ENCODE measurements at regions of chr7 and their contacts with region 1.

Region 1: GRCh38 chr7:99143853-99144672 is at the start of gene SMURF1:
- DNase-seq: peak; percentile 87
- total RNA-seq, gene SMURF1: 13.2 TPM

Region 2: DNA sequence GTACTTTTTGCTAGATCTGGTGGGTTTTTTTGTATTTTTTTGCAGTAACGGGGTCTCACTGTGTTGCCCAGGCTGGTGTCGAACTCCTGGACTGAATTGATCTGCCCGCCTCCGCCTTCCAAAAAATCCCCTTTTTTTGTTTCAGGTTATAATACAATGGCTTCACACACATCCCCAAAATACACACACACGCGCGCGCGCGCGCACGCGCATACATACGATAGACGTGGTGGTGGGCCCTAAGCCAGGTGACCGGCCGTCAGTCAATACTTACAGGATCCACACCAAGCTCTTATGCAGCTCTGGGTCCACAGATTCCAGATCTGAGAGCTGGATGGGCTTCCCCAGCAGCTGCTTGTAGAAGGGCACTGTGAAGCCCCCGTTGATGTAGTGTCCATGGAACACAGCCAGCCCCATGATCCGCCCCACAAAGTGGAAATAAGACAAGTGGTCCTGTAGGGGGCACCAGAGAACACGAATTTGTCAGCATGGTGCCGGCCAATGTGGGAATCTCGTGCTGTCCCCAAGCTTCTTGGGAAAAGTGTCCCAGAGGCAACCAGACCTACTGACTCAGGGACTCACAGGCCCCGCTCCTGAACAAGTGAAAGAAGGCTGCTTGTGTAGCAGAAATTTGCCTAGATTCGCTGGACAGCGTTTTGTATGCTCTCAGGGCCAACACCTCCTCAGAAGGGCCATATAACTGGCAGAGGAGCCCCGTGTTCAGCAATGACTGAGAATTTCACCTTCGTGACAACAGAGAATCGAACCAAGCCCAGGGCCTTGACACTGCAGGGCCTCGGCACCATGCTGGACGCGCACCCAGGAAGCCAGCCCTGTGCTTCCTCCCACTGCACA is 103.7 kb before region 1 on chr7:
- intact Hi-C with region 1: loop called (anchors 5 kb)
- DNase-seq: peak; percentile 83

Region 3: DNA sequence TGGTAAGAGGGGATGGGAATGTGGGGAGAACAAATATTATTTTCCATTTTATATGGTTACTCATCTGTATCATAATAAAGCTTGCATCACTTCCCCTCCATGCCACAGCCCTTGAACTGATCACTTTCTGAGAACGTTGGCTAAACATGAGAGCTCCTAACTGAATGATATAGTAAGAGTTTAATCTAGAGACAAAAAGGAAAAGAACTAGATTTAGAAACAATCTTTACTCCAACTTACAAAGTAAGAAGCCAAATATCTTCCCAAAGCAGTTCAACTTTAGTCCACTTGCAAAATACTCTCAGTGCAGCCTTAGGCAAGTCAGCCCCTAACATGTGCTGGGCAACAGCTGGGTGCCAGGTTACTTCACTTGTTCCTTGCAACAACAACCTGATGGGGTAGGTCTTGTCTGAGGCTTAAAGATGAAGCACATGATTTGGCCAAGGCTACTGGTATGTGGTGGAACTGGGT is 20.5 kb before region 1 on chr7:
- intact Hi-C with region 1: loop called (anchors 2 kb)
- DNase-seq: no peak

Region 4: DNA sequence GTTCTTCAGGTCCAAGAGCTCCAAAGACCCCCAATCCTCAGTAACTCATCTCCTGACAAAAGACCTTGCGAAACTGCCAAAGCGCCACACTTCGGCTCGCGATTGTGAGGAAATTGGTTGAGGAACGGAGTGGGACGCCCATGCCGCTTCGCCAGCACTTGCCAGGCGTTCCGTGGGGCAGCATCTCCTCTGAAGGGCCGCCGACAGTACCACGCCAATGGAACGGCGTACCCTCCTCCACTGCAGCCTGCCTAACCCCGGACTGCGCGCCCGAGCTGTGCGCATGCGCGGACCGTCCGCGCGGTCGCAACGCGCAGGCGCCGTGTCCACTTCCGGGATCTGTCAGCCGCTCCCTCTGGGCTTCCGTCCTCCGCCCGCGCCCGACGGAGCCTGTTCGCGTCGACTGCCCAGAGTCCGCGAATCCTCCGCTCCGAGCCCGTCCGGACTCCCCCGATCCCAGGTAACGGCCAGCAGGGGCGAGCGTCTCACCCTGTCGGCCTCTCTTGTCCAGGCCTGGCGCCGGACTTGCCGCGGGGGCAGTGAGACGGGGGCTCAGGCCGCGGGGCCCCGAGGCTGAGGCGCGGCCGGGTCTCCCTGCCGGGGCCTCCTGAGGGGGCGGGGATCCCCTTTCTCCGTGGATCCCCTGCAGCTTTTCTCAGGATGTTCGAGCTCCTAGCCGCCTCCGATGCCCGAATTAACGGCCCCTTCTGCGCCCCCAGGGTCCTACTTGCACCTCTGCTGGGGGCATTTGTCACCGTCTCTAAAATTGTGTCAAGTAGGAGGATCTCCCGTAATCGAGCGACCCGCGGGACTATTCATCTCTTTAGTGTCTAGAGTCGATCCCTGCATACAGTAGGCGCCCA is 181.7 kb after region 1 on chr7 and contains the start of gene ARPC1A:
- intact Hi-C with region 1: loop called (anchors 5 kb)
- DNase-seq: peak; percentile 94
- total RNA-seq, gene ARPC1A: 116 TPM